ENCODE measurements at regions of chr11 and their contacts with region 1.

Region 1: GRCh38 chr11:93921695-93922468 is 71.5 kb upstream of the VSTM5 start:
- DNase-seq: peak; percentile 71 to 77
- H3K4me3 ChIP-seq: no peak overlapping the region
- H3K4me3 Mint-ChIP-seq: no peak overlapping the region
- H3K27ac Mint-ChIP-seq: no peak overlapping the region
- H3K4me1 ChIP-seq: no peaks in the 10 kb centered on the region
- H3K4me1 Mint-ChIP-seq: peaks cover 10% of the 10 kb centered on the region
- H3K27me3 ChIP-seq: no peaks in the 10 kb centered on the region
- H3K27me3 Mint-ChIP-seq: peaks cover 4% of the 10 kb centered on the region
- CTCF ChIP-seq: peak; percentile 85 to 90

Region 2: GRCh38 chr11:93694109-93694508 is 227.8 kb before region 1 on chr11:
- CTCF ChIA-PET with region 1: no interaction called
- POLR2A ChIA-PET with region 1: no interaction called
- intact Hi-C with region 1: no loop called
- DNase-seq: no peak
- H3K4me3 ChIP-seq: no peak overlapping the region
- H3K4me3 Mint-ChIP-seq: no peak overlapping the region
- H3K27ac Mint-ChIP-seq: no peak overlapping the region
- H3K4me1 ChIP-seq: no peaks in the 10 kb centered on the region
- H3K4me1 Mint-ChIP-seq: no peaks in the 10 kb centered on the region
- H3K27me3 ChIP-seq: no peaks in the 10 kb centered on the region
- H3K27me3 Mint-ChIP-seq: no peaks in the 10 kb centered on the region
- CTCF ChIP-seq: peak; percentile 19 to 25

Region 3: DNA sequence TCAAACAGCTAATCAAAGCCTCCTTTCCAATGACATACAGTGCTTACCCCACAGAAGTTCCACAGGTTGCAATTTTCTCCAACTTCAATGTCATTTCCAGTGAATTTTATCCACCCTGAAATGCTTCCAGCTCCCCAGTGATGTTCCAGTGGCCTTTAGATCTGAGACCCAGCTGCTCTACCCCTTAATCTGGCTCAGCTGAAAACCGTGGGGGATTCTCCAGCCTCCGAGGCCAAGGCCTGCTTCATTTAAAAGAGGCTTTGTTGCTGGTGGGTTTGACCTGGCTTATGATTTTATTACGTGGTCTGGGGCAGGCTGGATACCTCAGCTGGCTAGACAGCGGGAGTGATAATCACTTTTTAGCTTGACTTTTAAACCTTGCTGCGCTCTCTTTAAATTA is 110.2 kb after region 1 on chr11:
- CTCF ChIA-PET with region 1: no interaction called
- POLR2A ChIA-PET with region 1: no interaction called
- intact Hi-C with region 1: loop called (anchors 5 kb)
- DNase-seq: no peak
- H3K4me3 ChIP-seq: no peak overlapping the region
- H3K4me3 Mint-ChIP-seq: no peak overlapping the region
- H3K27ac Mint-ChIP-seq: no peak overlapping the region
- H3K4me1 ChIP-seq: no peaks in the 10 kb centered on the region; the same call in 1 of the 2 replicates
- H3K4me1 Mint-ChIP-seq: no peaks in the 10 kb centered on the region
- H3K27me3 ChIP-seq: no peaks in the 10 kb centered on the region
- H3K27me3 Mint-ChIP-seq: peaks cover 4% of the 10 kb centered on the region
- CTCF ChIP-seq: no peak

Region 4: GRCh38 chr11:94128746-94129511 is 207.0 kb after region 1 on chr11 and contains the start of gene PANX1:
- CTCF ChIA-PET with region 1: interaction called, 5 read pairs
- POLR2A ChIA-PET with region 1: interaction called, 3 read pairs
- intact Hi-C with region 1: loop called (anchors 1 kb)
- DNase-seq: peak; percentile 89 to 93
- H3K4me3 ChIP-seq: peak within 1 kb of the TSS; percentile 70
- H3K4me3 Mint-ChIP-seq: no peak within 1 kb of the TSS
- H3K27ac Mint-ChIP-seq: no peak within 1 kb of the TSS
- H3K4me1 ChIP-seq: peaks cover 18% of the 10 kb centered on the region
- H3K4me1 Mint-ChIP-seq: peaks cover 15% of the 10 kb centered on the region
- H3K27me3 ChIP-seq: no peaks in the 10 kb centered on the region
- H3K27me3 Mint-ChIP-seq: no peaks in the 10 kb centered on the region
- CTCF ChIP-seq: no peak
- total RNA-seq, gene PANX1: 33.1 and 36.6 TPM in 2 replicates

Region 5: DNA sequence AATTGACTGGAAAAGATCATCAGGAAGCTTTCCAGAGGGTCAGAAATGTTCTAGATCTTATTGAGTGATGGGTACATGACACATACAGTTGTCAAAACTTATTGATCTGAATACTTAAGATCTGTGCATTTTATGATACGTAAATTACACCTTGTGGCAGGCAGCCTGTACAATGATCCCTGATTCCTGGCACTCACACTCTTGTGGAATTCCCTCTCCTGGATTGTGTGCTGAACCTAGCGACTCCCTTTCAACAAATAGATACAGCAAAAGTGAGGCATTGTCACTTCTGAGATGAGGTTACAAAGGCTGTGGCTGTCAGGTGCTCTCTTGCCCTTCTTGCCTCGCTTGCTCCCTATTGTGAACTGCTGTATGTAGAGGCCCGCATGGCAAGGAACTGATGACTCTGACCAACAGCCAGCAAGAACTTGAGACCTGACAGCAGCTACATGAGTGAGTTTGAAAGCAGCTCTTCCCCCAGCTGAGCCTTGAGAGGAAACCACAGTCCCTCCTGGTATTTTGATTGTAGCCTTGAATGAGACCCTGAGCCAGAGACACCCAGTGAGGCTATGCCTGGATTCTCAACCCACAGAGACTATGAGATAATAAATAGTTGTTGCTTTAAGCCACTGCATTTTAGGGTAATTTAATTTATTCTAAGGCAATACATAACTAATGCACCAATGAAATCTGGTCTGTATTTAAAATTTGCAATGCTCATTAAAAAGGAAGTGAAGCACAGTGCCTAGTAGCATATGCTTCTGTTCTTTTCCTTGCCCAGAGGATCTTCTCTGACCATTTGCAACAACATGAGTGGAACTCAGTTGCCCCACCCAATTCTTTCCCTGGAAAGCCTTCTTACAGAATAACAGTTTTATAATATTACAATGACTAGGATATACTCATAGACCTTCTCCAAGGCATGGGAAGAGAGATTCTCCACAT is 322.0 kb after region 1 on chr11:
- CTCF ChIA-PET with region 1: no interaction called
- POLR2A ChIA-PET with region 1: no interaction called
- intact Hi-C with region 1: loop called (anchors 5 kb)
- DNase-seq: no peak
- H3K4me3 ChIP-seq: no peak overlapping the region
- H3K4me3 Mint-ChIP-seq: no peak overlapping the region
- H3K27ac Mint-ChIP-seq: no peak overlapping the region
- H3K4me1 ChIP-seq: no peaks in the 10 kb centered on the region
- H3K4me1 Mint-ChIP-seq: no peaks in the 10 kb centered on the region
- H3K27me3 ChIP-seq: no peaks in the 10 kb centered on the region
- H3K27me3 Mint-ChIP-seq: peaks cover 9% of the 10 kb centered on the region
- CTCF ChIP-seq: no peak

Region 6: DNA sequence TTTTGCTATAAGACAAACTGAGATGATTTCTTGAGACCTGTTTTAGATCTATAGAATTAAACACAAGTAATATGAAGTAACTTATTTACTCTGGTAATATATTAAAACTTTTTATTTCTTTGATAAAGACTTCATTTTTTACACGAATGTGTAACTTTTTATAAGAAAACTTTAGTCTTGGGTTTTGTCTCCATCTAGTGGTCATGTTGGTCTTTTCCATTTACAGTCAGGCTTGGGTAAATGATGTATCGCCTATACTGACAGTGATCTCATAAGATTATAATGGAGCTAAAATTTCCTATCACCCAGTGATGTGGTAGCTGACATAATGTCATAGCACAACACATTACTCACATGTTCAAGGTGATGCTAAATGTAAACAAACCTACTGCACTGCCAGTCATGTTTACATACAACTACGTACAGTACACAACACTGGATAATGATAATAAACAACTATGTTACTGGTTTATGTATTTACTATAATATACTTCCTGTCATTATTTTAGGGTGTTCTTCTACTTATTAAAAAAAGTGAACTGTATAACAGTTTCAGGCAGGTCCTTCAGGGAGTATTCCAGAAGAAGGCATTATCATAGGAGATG is 582.9 kb after region 1 on chr11:
- CTCF ChIA-PET with region 1: no interaction called
- POLR2A ChIA-PET with region 1: no interaction called
- intact Hi-C with region 1: loop called (anchors 1 kb)
- DNase-seq: peak in 1 of 2 experiments; percentile 62
- H3K4me3 ChIP-seq: no peak overlapping the region
- H3K4me3 Mint-ChIP-seq: no peak overlapping the region
- H3K27ac Mint-ChIP-seq: no peak overlapping the region
- H3K4me1 ChIP-seq: no peaks in the 10 kb centered on the region
- H3K4me1 Mint-ChIP-seq: no peaks in the 10 kb centered on the region
- H3K27me3 ChIP-seq: no peaks in the 10 kb centered on the region
- H3K27me3 Mint-ChIP-seq: peaks cover 5% of the 10 kb centered on the region
- CTCF ChIP-seq: peak; percentile 87 to 88